CD8-positive, alpha-beta memory T cell (primary cell): ENCODE measurements at regions of chr2 and their contacts with region 1.

Region 1: GRCh38 chr2:69829256-69830046 is at the start of gene GMCL1:
- DNase-seq: peak; percentile 99
- H3K4me3 ChIP-seq: peak within 1 kb of the TSS; percentile 98
- H3K4me3 Mint-ChIP-seq: peak within 1 kb of the TSS; percentile 84 to 99 (median 96)
- H3K27ac ChIP-seq: peak within 1 kb of the TSS; percentile 93
- H3K27ac Mint-ChIP-seq: peak within 1 kb of the TSS; percentile 95 to 99 (median 97)
- H3K4me1 ChIP-seq: peaks cover 42% of the 10 kb centered on the region
- H3K4me1 Mint-ChIP-seq: peaks cover 42 to 61% (median 56%) of the 10 kb centered on the region in 3 donors
- H3K27me3 ChIP-seq: no peaks in the 10 kb centered on the region
- H3K27me3 Mint-ChIP-seq: no peaks in the 10 kb centered on the region
- total RNA-seq, gene GMCL1: 15.5 to 17.6 TPM

Region 2: DNA sequence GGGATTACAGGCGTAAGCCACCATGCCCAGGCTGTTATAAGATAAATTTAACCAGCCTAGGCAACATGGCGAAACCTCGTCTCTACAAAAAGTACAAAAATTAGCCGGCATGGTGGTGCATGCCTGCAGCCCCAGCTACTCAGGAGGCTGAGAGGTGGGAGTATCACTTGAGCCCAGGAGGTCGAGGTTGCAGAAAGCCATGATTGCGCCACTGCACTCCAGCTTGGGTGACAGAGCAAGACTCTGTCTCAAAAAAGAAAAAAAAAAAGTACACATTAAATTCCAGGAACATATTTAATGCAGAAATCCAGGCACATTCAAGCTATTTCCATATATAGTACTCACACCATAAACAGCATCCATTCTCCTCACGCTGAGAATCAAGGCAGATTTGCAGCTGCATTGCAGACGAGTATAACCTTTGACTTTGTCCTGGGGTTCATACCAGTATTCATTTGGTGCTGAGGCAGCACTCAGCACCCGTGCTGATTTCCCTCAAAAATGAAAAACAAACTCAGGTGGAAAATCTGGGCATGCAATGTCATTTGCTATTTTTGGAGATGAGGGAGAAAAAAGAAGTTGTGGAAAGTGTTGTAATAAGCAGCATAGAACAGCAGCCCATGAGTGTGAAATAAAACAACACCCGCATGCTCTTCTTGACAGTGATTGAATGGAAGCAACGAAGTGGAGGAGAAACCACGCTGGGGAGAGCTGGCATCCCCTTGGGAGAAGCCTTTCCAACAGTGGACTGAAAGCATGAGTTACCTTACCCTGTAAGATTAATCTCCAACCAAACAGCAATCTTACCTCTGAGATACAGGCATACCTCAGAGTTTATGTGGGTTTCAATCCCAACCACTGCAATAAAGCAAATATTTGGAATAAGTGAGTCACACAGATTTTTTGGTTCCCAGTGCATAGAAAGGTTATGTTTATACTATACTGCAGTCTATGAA is 134.3 kb before region 1 on chr2:
- CTCF ChIA-PET with region 1: no interaction called
- POLR2A ChIA-PET with region 1: interaction called, 12 read pairs
- DNase-seq: no peak
- H3K4me3 ChIP-seq: no peak overlapping the region
- H3K4me3 Mint-ChIP-seq: peak overlapping the region in 6 of 7 donors; percentile 44 to 87 (median 58)
- H3K27ac ChIP-seq: no peak overlapping the region
- H3K27ac Mint-ChIP-seq: peak overlapping the region in 7 of 8 donors; percentile 6 to 95 (median 77)
- H3K4me1 ChIP-seq: peaks cover 84% of the 10 kb centered on the region
- H3K4me1 Mint-ChIP-seq: peaks cover 78 to 95% (median 94%) of the 10 kb centered on the region in 3 donors
- H3K27me3 ChIP-seq: no peaks in the 10 kb centered on the region
- H3K27me3 Mint-ChIP-seq: no peaks in the 10 kb centered on the region

Region 3: GRCh38 chr2:69816923-69817542 is 12.4 kb before region 1 on chr2:
- CTCF ChIA-PET with region 1: interaction called, 18 read pairs
- POLR2A ChIA-PET with region 1: interaction called, 4 read pairs
- DNase-seq: peak; percentile 46 to 81 (median 74)
- H3K4me3 ChIP-seq: no peak overlapping the region
- H3K4me3 Mint-ChIP-seq: no peak overlapping the region
- H3K27ac ChIP-seq: no peak overlapping the region
- H3K27ac Mint-ChIP-seq: no peak overlapping the region
- H3K4me1 ChIP-seq: no peaks in the 10 kb centered on the region
- H3K4me1 Mint-ChIP-seq: peaks cover 2 to 9% (median 5%) of the 10 kb centered on the region in 3 donors
- H3K27me3 ChIP-seq: no peaks in the 10 kb centered on the region
- H3K27me3 Mint-ChIP-seq: no peaks in the 10 kb centered on the region

Region 4: GRCh38 chr2:69846182-69847088 is 17.0 kb after region 1 on chr2:
- CTCF ChIA-PET with region 1: no interaction called
- POLR2A ChIA-PET with region 1: no interaction called
- DNase-seq: no peak
- H3K4me3 ChIP-seq: no peak overlapping the region
- H3K4me3 Mint-ChIP-seq: peak overlapping the region in 1 of 7 donors; percentile 41
- H3K27ac ChIP-seq: no peak overlapping the region
- H3K27ac Mint-ChIP-seq: peak overlapping the region in 3 of 8 donors; percentile 5 to 19 (median 17)
- H3K4me1 ChIP-seq: no peaks in the 10 kb centered on the region
- H3K4me1 Mint-ChIP-seq: peaks cover 0 to 6% (median 0%) of the 10 kb centered on the region in 3 donors
- H3K27me3 ChIP-seq: no peaks in the 10 kb centered on the region
- H3K27me3 Mint-ChIP-seq: no peaks in the 10 kb centered on the region

Region 5: DNA sequence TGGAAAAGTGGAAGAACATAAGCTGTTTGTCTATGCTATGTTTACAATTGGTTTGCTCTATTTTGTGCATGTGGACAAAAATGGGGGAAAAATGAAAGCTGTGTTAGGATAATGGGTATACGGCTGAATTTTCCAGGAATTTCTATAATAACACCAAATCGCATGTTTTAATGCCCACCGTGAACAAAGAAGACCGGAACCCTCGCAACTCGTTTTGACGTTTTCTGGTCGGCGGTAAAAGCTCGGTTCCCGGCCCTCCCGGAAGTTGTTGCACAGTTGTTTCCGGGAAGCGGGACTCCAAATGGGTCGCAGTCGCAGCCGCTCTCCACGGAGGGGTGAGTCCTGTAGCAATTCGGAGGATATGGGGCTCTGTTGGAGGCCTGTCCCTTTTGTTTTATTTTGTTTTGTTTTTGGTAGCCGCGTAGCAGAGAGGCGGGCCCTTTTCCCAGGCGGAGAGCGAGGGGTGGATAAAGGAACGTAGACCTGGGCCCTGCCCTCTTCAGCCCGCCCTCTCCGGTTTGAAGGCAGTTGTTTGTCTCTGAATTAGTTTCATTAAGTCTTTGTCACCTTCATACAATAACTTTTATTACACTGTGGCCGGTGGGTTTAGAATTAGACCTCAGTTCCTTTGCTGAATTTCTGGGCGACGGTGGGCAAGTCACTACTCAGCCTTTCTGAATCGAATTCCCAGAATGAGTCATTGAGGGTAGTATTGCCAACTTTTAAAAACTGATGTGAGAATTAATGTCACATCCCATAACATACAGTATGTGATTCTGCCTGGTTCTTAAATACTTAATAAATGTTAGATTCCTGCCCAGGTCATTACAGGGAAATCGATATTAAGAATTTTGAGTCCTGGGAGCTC is 64.5 kb after region 1 on chr2 and contains the start of gene SNRNP27:
- CTCF ChIA-PET with region 1: no interaction called
- POLR2A ChIA-PET with region 1: no interaction called
- DNase-seq: peak; percentile 66 to 85 (median 75)
- H3K4me3 ChIP-seq: peak within 1 kb of the TSS; percentile 75
- H3K4me3 Mint-ChIP-seq: peak within 1 kb of the TSS; percentile 97 to 100 (median 100)
- H3K27ac ChIP-seq: peak within 1 kb of the TSS; percentile 84
- H3K27ac Mint-ChIP-seq: peak within 1 kb of the TSS; percentile 92 to 99 (median 98)
- H3K4me1 ChIP-seq: peaks cover 27% of the 10 kb centered on the region
- H3K4me1 Mint-ChIP-seq: peaks cover 39 to 57% (median 46%) of the 10 kb centered on the region in 3 donors
- H3K27me3 ChIP-seq: no peaks in the 10 kb centered on the region
- H3K27me3 Mint-ChIP-seq: peaks cover 0 to 2% of the 10 kb centered on the region in 2 donors
- total RNA-seq, gene SNRNP27: 59.6 to 61.2 TPM